ENCODE measurements at regions of chr17 and their contacts with region 1.

Region 1: GRCh38 chr17:37604556-37604955 is 4.7 kb downstream of the SYNRG start:
- DNase-seq: no peak
- H3K4me3 ChIP-seq: no peak overlapping the region
- H3K27ac ChIP-seq: no peak overlapping the region
- H3K4me1 ChIP-seq: no peaks in the 10 kb centered on the region
- H3K27me3 ChIP-seq: no peaks in the 10 kb centered on the region
- CTCF ChIP-seq: no peak
- POLR2A ChIP-seq: no peak

Region 2: GRCh38 chr17:36493956-36494355 is 1110.6 kb before region 1 on chr17:
- intact Hi-C with region 1: loop called (anchors 5 kb)
- DNase-seq: no peak
- H3K4me3 ChIP-seq: no peak overlapping the region
- H3K27ac ChIP-seq: no peak overlapping the region
- H3K4me1 ChIP-seq: no peaks in the 10 kb centered on the region
- H3K27me3 ChIP-seq: no peaks in the 10 kb centered on the region
- CTCF ChIP-seq: no peak
- POLR2A ChIP-seq: no peak

Region 3: DNA sequence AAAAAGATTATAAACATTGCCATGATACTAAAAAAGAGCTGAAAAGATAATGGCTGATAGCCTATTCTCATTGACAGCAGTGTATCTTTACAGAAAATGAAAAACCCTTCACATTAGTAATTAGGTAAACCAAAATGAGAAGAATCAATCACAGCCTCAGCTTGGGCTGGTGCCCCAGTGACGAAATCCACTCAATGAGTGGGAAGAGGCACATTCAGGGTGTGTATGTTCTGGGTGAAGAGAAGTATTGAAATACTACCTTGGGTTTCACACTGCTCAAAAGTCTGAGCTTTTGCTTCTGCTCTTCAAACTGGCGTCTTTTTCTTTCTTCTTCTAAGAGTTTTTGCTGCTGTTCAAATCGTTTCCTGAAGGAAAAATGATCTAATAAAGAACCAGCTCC is 19.5 kb before region 1 on chr17:
- intact Hi-C with region 1: no loop called
- DNase-seq: no peak
- H3K4me3 ChIP-seq: no peak overlapping the region
- H3K27ac ChIP-seq: no peak overlapping the region
- H3K4me1 ChIP-seq: no peaks in the 10 kb centered on the region
- H3K27me3 ChIP-seq: no peaks in the 10 kb centered on the region
- CTCF ChIP-seq: no peak
- POLR2A ChIP-seq: no peak